ENCODE measurements at regions of chr7 and their contacts with region 1.

Region 1: GRCh38 chr7:50246551-50246950 is 58.0 kb upstream of the IKZF1 start:
- DNase-seq: no peak
- ATAC-seq: no peak
- H3K4me3 ChIP-seq: no peak overlapping the region
- H3K4me3 Mint-ChIP-seq: no peak overlapping the region
- H3K27ac ChIP-seq: no peak overlapping the region
- H3K27ac Mint-ChIP-seq: no peak overlapping the region
- H3K4me1 ChIP-seq: no peaks in the 10 kb centered on the region
- H3K4me1 Mint-ChIP-seq: peaks cover 8% of the 10 kb centered on the region
- H3K27me3 ChIP-seq: no peaks in the 10 kb centered on the region
- H3K27me3 Mint-ChIP-seq: no peaks in the 10 kb centered on the region
- CTCF ChIP-seq: no peak

Region 2: DNA sequence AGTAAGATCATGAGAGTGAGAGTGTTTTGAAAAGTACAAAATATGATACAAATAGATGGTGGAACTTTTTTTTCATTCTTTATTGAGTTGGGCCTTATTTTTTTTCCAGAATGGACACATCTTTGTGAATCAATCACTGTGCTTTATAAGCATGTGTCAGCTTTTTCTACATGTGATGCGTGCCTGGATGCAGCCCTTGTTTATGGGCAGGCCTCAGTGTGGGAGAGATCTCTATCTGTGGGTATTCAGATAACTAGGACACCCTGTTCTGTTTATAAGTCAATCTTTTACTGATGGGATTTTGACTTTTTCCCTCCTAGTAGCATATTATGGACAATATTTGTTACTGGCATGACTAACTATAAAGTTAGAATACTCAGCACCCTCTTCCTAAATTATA is 15.0 kb after region 1 on chr7:
- CTCF ChIA-PET with region 1: interaction called, 7 read pairs
- POLR2A ChIA-PET with region 1: interaction called, 6 read pairs
- intact Hi-C with region 1: loop called in 1 of 2 experiments (anchors 2 kb)
- DNase-seq: peak in 2 of 9 experiments; percentile 43 to 48
- ATAC-seq: no peak
- H3K4me3 ChIP-seq: no peak overlapping the region
- H3K4me3 Mint-ChIP-seq: peak overlapping the region; percentile 55
- H3K27ac ChIP-seq: peak overlapping the region in 1 of 2 experiments; percentile 74
- H3K27ac Mint-ChIP-seq: peak overlapping the region; percentile 91
- H3K4me1 ChIP-seq: peaks cover 76% of the 10 kb centered on the region
- H3K4me1 Mint-ChIP-seq: peaks cover 81% of the 10 kb centered on the region
- H3K27me3 ChIP-seq: no peaks in the 10 kb centered on the region
- H3K27me3 Mint-ChIP-seq: no peaks in the 10 kb centered on the region
- CTCF ChIP-seq: no peak